Common myeloid progenitor, CD34-positive (primary cell): ENCODE measurements at regions of chr5 and their contacts with region 1.

Region 1: DNA sequence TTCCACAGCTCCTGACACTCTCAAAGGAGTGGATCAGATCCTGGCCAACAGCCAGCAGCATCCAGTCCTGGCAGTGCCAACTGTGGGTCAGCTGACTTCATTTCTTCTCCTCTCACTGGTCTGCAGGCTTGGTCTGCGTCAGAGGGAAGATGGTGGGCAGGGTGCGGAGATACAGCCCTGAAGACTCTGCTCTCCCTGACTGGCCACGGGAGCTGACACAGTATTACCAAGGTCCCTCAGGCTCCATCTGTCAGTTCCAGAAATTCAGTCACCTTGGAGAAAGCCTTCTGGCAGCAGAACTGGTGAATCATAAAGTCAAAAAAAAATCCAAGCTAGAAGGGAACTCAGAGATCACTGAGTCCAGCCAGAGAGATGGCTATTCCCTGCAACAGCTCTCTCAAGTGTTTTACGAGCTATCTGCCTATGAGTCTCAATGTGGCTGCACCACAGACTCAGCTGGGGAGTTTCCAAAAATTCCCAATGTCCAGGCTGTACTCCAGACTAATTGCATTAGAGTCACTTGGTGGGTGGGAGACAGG is 28.0 kb downstream of the C1QTNF2 start:
- DNase-seq: no peak
- H3K4me3 ChIP-seq: no peak overlapping the region
- H3K27ac ChIP-seq: no peak overlapping the region
- H3K4me1 ChIP-seq: peaks cover 0 to 10% (median 5%) of the 10 kb centered on the region in 4 experiments
- H3K27me3 ChIP-seq: no peaks in the 10 kb centered on the region

Region 2: DNA sequence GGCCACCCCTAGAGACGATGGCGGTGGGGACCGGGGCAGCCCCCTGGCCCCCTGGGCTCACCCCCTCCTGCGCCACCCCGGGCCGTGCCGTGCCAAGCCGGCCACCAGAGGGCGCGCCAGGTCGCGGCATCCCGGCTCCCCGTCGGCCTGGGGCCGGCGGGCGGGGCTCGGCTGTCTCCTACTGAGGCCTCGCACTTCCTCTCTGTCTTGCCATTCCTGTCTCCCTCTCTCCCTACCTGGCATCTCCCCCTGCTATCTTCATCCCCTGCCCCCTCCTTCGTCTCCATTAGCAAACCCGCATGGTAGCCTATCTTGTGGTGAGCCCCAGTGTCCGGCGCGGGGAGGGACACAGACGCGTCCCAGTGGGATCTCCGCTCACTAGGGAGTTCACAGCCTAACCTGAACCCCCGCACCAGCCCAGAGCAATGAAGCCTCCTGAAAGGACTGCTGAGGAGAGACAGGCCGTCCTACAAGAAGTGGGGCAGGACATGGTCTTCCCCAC is 143.0 kb before region 1 on chr5:
- CTCF ChIA-PET with region 1: interaction called, 85 read pairs
- POLR2A ChIA-PET with region 1: interaction called, 3 read pairs
- DNase-seq: peak; percentile 46 to 71 (median 71)
- H3K4me3 ChIP-seq: peak overlapping the region in 6 of 7 experiments; percentile 14 to 83 (median 67)
- H3K27ac ChIP-seq: no peak overlapping the region
- H3K4me1 ChIP-seq: peaks cover 0 to 26% (median 24%) of the 10 kb centered on the region in 4 experiments
- H3K27me3 ChIP-seq: no peaks in the 10 kb centered on the region

Region 3: DNA sequence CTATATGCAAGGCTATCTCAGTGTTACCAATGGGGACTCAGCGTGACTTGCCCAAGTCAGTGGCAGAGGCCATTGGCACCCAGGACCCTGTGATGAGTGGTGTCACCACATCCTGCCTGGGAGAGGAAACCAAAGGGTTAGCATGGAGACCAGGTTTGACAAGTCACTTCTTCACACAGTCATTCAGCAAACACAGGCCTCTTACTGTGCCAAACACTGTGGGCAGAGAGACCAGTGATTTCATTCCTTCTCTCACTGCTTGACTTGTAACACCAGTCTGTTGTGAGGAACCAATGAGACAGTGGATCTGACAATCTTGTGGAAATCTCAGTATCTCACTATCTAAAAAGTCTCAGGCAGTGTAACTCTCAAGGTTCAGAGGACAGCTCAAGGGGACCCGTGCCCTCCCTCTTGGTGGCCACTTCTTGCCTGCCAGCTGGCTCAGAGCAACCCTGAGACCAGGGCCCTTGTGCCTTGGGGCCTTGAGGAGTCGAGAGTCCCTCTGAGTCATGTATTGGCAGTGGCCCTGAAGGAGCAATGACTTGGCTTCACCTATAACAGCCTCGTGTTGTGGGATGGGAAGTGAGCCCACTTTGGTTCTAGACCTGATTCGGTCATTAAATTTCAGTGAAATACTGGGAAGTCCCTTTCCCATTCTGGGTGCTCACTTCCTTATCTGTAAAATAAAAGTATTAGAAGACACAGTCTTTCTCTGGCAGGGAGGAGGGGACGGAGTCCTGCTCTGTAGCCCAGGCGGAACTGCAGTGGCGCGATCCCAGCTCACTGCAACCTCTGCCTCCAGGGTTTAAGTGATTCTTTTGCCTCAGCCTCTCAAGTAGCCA is 111.6 kb before region 1 on chr5:
- CTCF ChIA-PET with region 1: interaction called, 17 read pairs
- POLR2A ChIA-PET with region 1: no interaction called
- DNase-seq: peak in 2 of 3 donors; percentile 41 to 42
- H3K4me3 ChIP-seq: no peak overlapping the region
- H3K27ac ChIP-seq: no peak overlapping the region
- H3K4me1 ChIP-seq: no peaks in the 10 kb centered on the region
- H3K27me3 ChIP-seq: no peaks in the 10 kb centered on the region

Region 4: DNA sequence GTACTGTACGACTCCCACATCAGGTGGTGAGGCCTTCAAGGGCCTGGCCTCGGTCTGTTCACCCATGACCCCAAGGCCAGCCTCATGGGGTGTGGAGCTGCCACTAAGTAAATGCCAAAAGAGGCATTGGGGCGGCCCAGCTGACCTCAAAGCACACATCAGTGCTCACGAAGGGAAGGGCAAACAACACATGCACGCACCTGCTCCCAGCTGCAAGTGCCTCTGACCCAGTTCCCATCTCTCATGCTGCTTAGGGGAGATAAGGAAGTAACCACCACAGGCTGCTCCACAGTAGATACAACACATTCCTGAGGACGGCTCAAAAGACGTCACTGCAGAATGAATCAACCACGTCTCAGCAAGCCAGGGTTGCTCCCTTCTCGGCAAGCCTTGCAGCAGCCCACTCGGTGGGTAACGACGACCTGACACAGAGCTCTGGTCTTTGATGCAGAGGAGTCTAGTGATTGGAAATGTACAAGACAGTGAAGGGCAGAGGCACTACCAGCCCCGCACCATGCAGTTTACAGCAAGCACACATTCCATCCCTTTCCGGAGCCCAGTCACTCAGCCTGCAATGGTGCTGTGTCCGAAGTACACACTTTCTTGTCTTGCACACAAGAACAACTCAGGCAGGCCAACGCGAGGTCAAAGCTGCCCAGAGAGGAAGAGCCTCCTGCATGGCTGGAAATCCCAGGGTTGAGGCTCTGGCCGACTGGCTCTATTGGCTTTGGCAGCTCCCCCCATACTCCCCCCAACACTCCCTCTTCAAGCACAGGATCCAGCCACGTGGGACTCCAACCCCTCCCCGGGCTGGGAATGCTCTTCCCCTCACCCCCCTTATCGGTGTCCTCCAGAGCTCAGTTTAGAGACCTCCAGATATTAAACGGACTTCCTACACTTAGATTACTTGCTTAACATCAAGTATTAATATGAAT is 81.3 kb before region 1 on chr5:
- CTCF ChIA-PET with region 1: interaction called, 11 read pairs
- POLR2A ChIA-PET with region 1: no interaction called
- DNase-seq: peak; percentile 96 to 99 (median 98)
- H3K4me3 ChIP-seq: peak overlapping the region in 1 of 7 experiments; percentile 41
- H3K27ac ChIP-seq: peak overlapping the region; percentile 4 to 57
- H3K4me1 ChIP-seq: peaks cover 13 to 56% (median 38%) of the 10 kb centered on the region in 4 experiments
- H3K27me3 ChIP-seq: no peaks in the 10 kb centered on the region

Region 5: DNA sequence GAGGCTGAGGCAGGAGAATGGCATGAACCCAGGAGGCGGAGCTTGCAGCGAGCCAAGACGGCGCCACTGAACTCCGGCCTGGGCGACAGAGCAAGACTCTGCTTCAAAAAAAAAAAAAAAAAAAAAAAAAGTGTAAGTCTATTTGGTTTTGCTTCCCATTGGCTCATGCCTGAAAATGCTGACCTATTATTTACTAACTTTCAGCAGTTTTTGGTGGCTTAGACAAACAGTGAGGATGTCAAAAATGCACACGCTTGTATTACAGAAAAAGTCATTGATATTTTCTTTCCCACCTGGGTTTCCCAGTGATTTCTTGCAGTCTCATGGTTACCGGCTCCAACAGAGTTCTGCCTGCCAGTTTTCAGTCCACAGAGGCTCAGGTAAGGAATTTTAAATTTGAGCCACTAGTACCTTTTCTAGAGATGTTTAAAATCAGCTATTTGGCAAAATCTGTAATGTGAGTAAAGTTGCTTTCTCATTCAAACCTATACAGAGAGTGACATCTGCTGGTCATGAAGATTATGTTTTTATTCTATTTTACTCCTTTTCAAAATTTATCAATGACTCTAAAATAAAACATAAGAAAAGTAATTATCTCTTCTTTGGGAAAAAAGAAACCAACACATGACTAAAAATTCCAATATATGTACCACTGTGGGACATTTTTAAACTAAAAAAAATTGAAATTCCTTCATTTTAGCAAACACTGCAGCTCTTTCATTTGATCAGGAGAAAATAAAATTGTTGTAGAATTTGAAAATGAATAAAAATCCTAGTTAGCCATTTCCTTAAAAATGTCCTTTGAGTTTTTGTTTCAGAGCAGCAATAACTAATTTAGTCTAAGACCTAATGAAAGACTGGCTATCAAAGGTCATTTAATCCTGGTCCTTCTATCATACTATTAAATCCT is 48.6 kb after region 1 on chr5:
- CTCF ChIA-PET with region 1: interaction called, 15 read pairs
- POLR2A ChIA-PET with region 1: interaction called, 3 read pairs
- DNase-seq: peak; percentile 36 to 63 (median 59)
- H3K4me3 ChIP-seq: no peak overlapping the region
- H3K27ac ChIP-seq: no peak overlapping the region
- H3K4me1 ChIP-seq: no peaks in the 10 kb centered on the region
- H3K27me3 ChIP-seq: no peaks in the 10 kb centered on the region

Region 6: GRCh38 chr5:160458806-160459800 is 116.6 kb after region 1 on chr5:
- CTCF ChIA-PET with region 1: no interaction called
- POLR2A ChIA-PET with region 1: no interaction called
- DNase-seq: no peak
- H3K4me3 ChIP-seq: no peak overlapping the region
- H3K27ac ChIP-seq: no peak overlapping the region
- H3K4me1 ChIP-seq: peaks cover 5 to 35% (median 25%) of the 10 kb centered on the region in 4 experiments
- H3K27me3 ChIP-seq: no peaks in the 10 kb centered on the region